HEK293T (cell line): ENCODE measurements at regions of chr6 and their contacts with region 1.

Region 1: DNA sequence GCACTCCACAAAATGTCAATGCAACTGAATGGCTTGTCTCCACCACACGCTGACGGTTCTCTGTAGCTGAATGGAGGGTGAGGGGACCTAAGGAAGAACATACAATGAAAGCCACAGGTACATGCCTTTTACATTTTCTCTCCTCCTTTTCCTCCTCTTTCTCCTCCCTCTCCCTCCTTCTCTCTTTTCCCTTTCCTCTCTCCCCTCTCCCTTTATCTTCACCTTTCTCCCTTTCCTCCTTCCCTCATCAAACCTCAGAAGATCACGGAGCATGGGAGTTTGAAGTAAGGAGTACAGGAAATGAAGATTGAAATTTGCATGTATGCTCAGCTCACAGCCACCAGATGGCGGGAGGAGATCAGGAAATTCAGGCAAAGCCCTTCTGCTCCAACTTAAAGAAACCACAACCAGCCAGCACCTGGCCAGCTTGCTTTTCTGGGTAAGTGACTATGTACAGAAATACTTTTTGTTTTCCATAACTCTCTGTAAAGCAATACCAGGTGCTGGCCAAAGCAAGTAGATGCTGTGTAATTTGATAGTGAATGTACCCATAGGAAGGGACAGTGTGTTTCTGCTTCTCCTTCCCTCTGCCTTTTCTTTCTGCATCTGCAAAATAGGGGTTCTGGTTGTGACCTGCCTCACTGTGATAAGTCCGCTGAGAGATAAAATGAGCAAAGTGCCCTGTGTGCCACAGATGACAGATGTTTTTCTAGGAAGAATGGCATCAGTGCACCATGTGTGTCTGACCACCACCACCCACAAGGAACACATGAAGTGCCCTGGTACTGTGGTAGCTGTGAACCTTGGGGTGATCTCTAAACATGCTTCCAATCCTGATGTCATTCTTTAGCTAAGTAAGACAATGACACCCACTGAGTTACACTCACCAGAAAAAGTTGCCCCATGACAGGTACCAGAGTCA is 18.6 kb upstream of the FOXO3 start:
- DNase-seq: peak; percentile 72

Region 2: GRCh38 chr6:108510461-108511319 is 31.4 kb before region 1 on chr6:
- CTCF ChIA-PET with region 1: no interaction called
- POLR2A ChIA-PET with region 1: no interaction called
- DNase-seq: no peak

Region 3: DNA sequence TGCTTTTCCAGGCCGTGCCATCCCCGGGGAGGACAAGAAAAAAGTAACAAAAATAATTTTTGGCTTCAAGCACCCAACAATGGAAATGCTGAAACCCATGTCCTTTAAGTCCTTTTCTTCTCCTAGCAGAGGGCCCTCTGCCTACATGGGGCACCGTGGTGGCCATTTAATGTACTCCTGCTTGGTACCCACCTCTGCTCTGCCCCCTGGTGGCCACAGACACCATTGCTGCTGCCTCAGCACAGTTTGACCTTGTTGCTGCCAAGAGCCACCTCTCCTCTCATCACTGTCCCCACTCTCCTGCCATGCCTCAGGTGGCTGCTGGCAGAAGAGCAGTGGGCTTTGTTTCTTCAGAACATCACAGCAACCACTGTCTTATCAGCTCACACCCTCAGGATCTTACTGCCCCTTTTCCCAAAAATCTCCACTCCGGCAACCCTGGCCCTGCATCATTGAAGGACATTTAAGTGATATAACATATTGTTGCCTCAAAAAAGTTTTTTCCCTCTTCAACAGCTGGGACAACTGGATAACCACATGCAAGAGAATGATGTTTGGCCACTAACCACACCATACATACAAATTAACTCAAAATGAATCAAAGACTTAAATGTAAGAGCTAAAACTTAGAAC is 293.2 kb after region 1 on chr6:
- CTCF ChIA-PET with region 1: interaction called, 12 read pairs
- POLR2A ChIA-PET with region 1: no interaction called
- DNase-seq: peak; percentile 83

Region 4: GRCh38 chr6:108896111-108896661 is 354.1 kb after region 1 on chr6:
- CTCF ChIA-PET with region 1: interaction called, 20 read pairs
- POLR2A ChIA-PET with region 1: interaction called, 3 read pairs
- DNase-seq: no peak

Region 5: DNA sequence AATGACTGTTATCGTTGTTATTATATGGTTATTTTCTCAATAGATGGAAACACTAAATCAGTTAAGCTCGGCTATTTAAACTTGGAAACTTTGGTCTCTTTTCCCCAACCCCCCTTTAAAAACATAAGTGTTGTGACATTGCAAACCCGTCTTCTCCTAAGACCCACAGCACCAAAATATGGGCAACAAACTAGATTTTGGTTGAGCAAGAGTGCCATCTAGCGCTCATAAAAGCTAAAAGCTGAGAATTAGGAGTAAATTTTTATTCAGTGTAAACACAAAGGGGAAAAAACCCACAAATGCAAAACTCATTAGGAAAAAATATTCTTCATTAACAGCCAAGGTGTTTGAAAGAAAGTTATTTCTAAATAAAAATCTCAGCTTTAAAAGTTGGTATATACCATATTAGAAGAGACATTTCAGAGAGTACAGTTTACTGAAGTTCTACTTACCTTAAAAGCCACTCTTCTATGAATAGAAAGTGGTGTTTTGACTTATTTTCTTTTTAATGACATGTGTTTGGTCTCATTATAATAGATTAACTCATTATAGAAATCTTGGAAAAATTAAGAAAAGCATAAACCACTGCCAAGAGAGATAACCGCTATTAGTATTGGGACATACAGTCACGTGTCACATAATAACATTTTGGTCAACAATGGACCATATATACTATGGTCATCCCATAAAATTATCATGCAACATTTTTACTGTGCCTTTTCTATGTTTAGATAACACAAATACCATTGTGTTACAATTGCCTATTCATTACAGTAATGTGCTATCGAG is 531.4 kb after region 1 on chr6:
- CTCF ChIA-PET with region 1: interaction called, 13 read pairs
- POLR2A ChIA-PET with region 1: no interaction called
- DNase-seq: peak; percentile 40